GM12878 (cell line): ENCODE measurements at regions of chr14 and their contacts with region 1.

Region 1: DNA sequence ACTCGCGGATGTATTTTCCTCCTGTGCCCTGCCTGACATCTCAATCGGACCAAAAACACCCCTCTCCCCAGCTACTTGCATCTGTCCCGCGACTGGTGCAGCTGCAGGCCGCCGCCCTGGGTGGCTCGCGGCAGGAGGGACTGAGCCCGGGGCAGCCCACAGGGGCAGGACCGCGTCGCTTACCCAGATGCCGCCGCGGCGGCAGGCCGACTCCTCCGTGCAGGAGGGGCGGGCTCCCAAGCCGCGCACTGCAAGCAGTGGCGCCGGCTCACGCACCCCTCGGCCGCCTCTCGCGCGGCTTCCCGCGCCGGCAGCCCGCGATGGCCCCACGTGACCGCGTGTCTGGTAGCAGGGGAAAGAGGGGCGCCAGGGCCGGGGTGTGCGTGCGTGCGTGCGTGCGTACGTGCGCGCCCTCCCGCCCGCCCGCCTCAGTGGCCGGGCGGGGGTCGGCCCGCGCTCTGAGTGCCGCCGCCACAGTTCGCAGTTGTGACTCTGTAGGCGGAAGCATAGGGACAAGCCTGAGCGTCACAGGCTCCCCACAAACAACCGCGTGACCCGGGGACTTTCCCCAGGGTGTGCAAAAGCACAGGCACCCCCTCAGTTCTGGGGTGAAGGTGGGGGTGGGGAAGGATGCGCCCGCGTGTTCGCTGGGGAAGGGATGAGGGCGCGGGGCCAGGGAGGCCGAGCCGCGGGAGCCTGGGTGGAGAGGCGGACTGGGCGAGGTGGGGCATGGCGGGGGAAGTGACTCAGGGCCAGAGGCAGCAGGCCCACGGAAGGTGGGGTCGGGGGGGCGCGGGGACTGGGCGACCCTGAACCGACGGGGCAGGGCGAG is at the start of gene ZBTB25:
- DNase-seq: peak; percentile 83
- ATAC-seq: peak; percentile 71
- H3K4me3 ChIP-seq: peak within 1 kb of the TSS; percentile 91
- H3K27ac ChIP-seq: peak within 1 kb of the TSS; percentile 98
- H3K4me1 ChIP-seq: peaks cover 6% of the 10 kb centered on the region
- H3K27me3 ChIP-seq: no peaks in the 10 kb centered on the region
- CTCF ChIP-seq: no peak
- EP300 ChIP-seq: peak; percentile 82 to 86
- POLR2A ChIP-seq: peak; percentile 85
- RAD21 ChIP-seq: no peak
- polyA plus RNA-seq, gene ZBTB25: 4.1 to 5.6 TPM

Region 2: GRCh38 chr14:64444984-64445845 is 58.5 kb before region 1 on chr14:
- CTCF ChIA-PET with region 1: interaction called, 7 read pairs
- POLR2A ChIA-PET with region 1: interaction called, 8 read pairs
- RAD21 ChIA-PET with region 1: interaction called, 12 read pairs
- SMC1A ChIA-PET with region 1: interaction called, 9 read pairs
- in situ Hi-C with region 1: no loop called
- intact Hi-C with region 1: loop called (anchors 2 kb)
- DNase-seq: peak; percentile 84
- ATAC-seq: peak; percentile 99
- H3K4me3 ChIP-seq: no peak overlapping the region
- H3K27ac ChIP-seq: peak overlapping the region; percentile 97
- H3K4me1 ChIP-seq: peaks cover 22% of the 10 kb centered on the region
- H3K27me3 ChIP-seq: no peaks in the 10 kb centered on the region
- CTCF ChIP-seq: peak in 2 of 3 experiments; percentile 15 to 20; a peak in 1 of 6 replicates
- EP300 ChIP-seq: peak; percentile 75 to 77; a peak in 2 of 4 replicates
- POLR2A ChIP-seq: peak; percentile 37; the same call in 1 of the 2 replicates
- RAD21 ChIP-seq: no peak

Region 3: GRCh38 chr14:64491637-64492036 is 12.1 kb before region 1 on chr14:
- CTCF ChIA-PET with region 1: interaction called, 43 read pairs
- POLR2A ChIA-PET with region 1: interaction called, 7 read pairs
- RAD21 ChIA-PET with region 1: interaction called, 7 read pairs
- SMC1A ChIA-PET with region 1: interaction called, 51 read pairs
- in situ Hi-C with region 1: no loop called
- intact Hi-C with region 1: no loop called
- DNase-seq: no peak
- ATAC-seq: no peak
- H3K4me3 ChIP-seq: no peak overlapping the region
- H3K27ac ChIP-seq: no peak overlapping the region
- H3K4me1 ChIP-seq: no peaks in the 10 kb centered on the region
- H3K27me3 ChIP-seq: no peaks in the 10 kb centered on the region
- CTCF ChIP-seq: no peak
- EP300 ChIP-seq: no peak
- POLR2A ChIP-seq: no peak
- RAD21 ChIP-seq: no peak

Region 4: GRCh38 chr14:64540208-64541157 is 36.8 kb after region 1 on chr14 and contains the start of gene HSPA2:
- CTCF ChIA-PET with region 1: interaction called, 4 read pairs
- POLR2A ChIA-PET with region 1: interaction called, 3 read pairs
- RAD21 ChIA-PET with region 1: interaction called, 3 read pairs
- SMC1A ChIA-PET with region 1: interaction called, 3 read pairs
- in situ Hi-C with region 1: no loop called
- intact Hi-C with region 1: loop called (anchors 2 kb)
- DNase-seq: peak; percentile 89
- ATAC-seq: peak; percentile 98
- H3K4me3 ChIP-seq: peak within 1 kb of the TSS; percentile 85
- H3K27ac ChIP-seq: peak within 1 kb of the TSS; percentile 8; the same call in 1 of the 2 replicates
- H3K4me1 ChIP-seq: peaks cover 4% of the 10 kb centered on the region; the same call in 1 of the 2 replicates
- H3K27me3 ChIP-seq: peaks cover 6 to 9% of the 10 kb centered on the region in 2 experiments
- CTCF ChIP-seq: peak; percentile 69 to 84 (median 77)
- EP300 ChIP-seq: no peak
- POLR2A ChIP-seq: peak; percentile 90
- RAD21 ChIP-seq: 0 out of 2 replicates have a peak, but pooled peaks have one; percentile 32
- polyA plus RNA-seq, gene HSPA2: 0.02 to 0.03 TPM

Region 5: GRCh38 chr14:64569184-64569631 is 65.5 kb after region 1 on chr14:
- CTCF ChIA-PET with region 1: no interaction called
- POLR2A ChIA-PET with region 1: no interaction called
- RAD21 ChIA-PET with region 1: no interaction called
- SMC1A ChIA-PET with region 1: no interaction called
- in situ Hi-C with region 1: no loop called
- intact Hi-C with region 1: no loop called
- DNase-seq: no peak
- ATAC-seq: no peak
- H3K4me3 ChIP-seq: no peak overlapping the region
- H3K27ac ChIP-seq: no peak overlapping the region
- H3K4me1 ChIP-seq: no peaks in the 10 kb centered on the region
- H3K27me3 ChIP-seq: no peaks in the 10 kb centered on the region; a peak in 1 of 4 replicates
- CTCF ChIP-seq: no peak
- EP300 ChIP-seq: no peak
- POLR2A ChIP-seq: no peak
- RAD21 ChIP-seq: no peak